ENCODE measurements at regions of chr2 and their contacts with region 1.

Region 1: DNA sequence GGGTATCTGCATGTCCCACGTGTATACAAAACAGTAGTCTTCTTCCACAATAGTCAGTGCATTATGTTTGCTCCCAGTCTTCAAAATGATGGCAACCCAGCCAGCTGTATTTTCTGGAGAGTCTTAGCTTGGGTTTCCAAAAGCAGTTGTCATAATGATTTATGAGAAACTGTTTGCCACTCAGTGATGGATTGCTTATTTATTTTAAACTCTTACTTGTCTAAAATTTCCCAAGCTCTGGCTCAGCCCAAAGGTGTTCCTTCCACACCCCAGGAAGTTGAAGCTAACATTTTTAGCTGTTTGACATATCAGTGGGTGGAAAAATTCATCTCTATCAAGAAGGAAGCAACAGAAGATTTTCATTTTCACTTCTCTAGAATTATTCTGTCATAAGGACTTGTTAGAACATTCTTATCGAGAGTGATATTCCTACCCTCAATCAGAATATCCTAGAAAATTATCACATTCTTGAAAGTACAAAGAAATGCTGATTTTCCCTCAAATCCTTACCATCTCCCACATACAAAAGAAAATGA is 78.8 kb downstream of the ASAP2 start:
- DNase-seq: no peak
- H3K4me3 ChIP-seq: no peak overlapping the region
- H3K27ac ChIP-seq: no peak overlapping the region
- H3K4me1 ChIP-seq: peaks cover 2 to 21% (median 10%) of the 10 kb centered on the region in 4 experiments
- H3K27me3 ChIP-seq: no peaks in the 10 kb centered on the region; a peak in 1 of 7 replicates
- CTCF ChIP-seq: no peak
- EP300 ChIP-seq: no peak
- POLR2A ChIP-seq: no peak
- RAD21 ChIP-seq: no peak

Region 2: GRCh38 chr2:9274701-9275343 is 10.6 kb before region 1 on chr2:
- CTCF ChIA-PET with region 1: interaction called, 15 read pairs
- POLR2A ChIA-PET with region 1: no interaction called
- DNase-seq: no peak
- H3K4me3 ChIP-seq: no peak overlapping the region
- H3K27ac ChIP-seq: no peak overlapping the region
- H3K4me1 ChIP-seq: peaks cover 0 to 8% (median 5%) of the 10 kb centered on the region in 4 experiments; a peak in 3 of 7 replicates
- H3K27me3 ChIP-seq: no peaks in the 10 kb centered on the region
- CTCF ChIP-seq: no peak
- EP300 ChIP-seq: no peak
- POLR2A ChIP-seq: no peak
- RAD21 ChIP-seq: no peak

Region 3: DNA sequence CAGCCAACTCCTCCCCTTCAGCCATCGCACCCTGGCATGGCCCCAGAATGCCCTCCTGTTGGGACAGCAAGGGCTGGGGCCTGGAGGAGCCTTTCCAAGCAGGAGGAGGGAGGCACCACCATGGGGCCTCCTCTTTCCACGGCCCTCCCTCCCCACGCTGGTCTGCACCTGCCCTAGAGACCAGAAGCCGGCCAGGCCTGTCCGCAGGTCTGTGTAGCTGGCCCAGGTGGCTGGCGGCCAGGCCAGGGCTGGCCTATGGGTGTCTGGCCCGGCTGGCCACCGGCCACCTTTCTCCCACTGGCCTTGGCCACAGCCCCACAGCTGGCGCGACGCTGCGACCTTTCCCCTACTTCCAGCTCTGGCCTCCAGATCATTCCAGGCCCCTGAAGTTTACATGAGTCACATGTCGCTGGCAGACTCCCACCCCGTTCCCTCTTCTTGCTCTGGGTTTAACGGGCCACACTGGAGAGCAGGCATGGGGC is 724.4 kb after region 1 on chr2:
- CTCF ChIA-PET with region 1: no interaction called
- POLR2A ChIA-PET with region 1: no interaction called
- DNase-seq: no peak
- H3K4me3 ChIP-seq: no peak overlapping the region
- H3K27ac ChIP-seq: no peak overlapping the region
- H3K4me1 ChIP-seq: no peaks in the 10 kb centered on the region
- H3K27me3 ChIP-seq: no peaks in the 10 kb centered on the region
- CTCF ChIP-seq: no peak
- EP300 ChIP-seq: no peak
- POLR2A ChIP-seq: no peak
- RAD21 ChIP-seq: no peak